ENCODE measurements at regions of chr19 and their contacts with region 1.

Region 1: DNA sequence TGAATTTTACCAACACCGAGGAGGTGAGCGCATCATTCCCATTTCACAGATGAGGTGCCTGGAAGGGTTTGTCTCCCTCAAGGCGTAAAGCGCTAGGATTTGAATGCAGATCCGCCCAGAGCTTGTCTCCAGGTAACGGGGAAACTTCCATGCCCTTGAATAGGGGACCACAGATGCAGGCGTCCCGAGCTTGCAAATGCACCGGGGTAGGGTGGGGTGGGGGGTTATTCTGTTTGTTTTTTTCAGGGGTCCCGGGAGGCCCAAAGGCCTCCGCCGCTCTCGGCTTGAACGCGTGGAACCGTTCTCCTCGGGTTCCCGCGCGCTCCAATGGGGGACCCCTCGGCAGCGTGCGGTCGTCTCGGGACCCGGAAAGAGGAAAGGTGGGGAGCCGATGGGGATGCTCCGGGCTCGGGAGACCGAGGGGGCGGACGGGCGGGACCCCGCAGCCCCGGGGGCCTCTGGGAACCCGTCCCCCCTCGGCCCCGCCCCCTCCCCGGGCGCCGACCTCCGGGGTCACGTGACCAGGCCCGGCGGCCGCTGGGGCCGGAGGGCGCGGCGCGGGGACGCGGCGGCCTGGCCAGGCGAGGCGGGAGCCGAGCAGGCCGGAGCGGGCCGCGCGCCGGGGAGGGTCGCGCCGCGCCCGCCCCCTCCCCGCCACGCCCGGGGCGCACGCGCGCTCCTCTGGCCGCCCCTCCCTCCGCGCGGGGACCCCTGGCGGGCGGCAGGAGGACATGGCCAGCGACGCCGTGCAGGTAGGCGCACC is at the start of gene PKN1:
- DNase-seq: peak; percentile 52
- H3K4me3 ChIP-seq: peak within 1 kb of the TSS; percentile 65
- H3K27ac ChIP-seq: peak within 1 kb of the TSS; percentile 51
- H3K4me1 ChIP-seq: peaks cover 8% of the 10 kb centered on the region
- H3K27me3 ChIP-seq: no peaks in the 10 kb centered on the region
- CTCF ChIP-seq: no peak
- total RNA-seq, gene PKN1: 35.9 to 37.5 TPM

Region 2: DNA sequence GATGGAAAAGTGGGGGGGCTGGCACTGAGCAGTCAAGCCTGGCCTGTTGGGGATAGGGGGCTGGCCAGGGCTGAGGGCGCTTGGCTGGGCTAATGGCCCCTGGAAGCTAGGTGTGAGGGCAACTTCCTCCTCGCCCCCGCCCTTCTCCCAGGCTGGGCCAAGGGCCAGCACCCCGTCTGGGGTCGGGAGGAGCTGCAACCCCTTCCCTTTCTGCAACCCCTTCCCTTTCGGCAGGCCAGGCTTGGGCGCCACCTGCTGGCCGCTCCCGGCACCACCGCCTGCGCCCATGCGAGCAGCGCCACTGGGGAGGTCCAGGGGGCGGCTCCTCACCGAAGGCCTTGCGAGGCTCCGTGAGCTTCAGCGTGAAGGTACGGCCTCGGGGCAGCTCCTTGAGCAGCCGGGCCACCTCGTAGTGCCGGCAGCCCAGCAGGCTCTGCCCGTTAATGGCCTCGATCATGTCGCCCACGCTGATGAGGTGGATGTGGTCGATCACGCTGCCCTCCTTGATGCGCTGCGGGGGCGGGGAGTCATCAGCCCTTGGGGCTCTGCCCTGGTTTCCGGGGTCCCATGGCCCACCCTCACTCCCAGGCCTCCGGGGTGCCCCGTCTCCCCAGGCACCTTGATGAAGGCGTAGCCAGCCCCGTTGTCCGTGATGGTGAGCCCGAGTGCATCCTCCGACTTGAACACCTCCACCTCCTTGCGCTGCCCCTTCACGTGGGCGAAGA is 47.2 kb after region 1 on chr19:
- intact Hi-C with region 1: loop called (anchors 10 kb)
- DNase-seq: no peak
- H3K4me3 ChIP-seq: no peak overlapping the region
- H3K27ac ChIP-seq: no peak overlapping the region
- H3K4me1 ChIP-seq: peaks cover under 1% of the 10 kb centered on the region
- H3K27me3 ChIP-seq: peaks cover under 1% of the 10 kb centered on the region
- CTCF ChIP-seq: peak; percentile 84

Measured in colonic mucosa (tissue), 4 donors.